ENCODE measurements at regions of chr16 and their contacts with region 1.

Region 1: DNA sequence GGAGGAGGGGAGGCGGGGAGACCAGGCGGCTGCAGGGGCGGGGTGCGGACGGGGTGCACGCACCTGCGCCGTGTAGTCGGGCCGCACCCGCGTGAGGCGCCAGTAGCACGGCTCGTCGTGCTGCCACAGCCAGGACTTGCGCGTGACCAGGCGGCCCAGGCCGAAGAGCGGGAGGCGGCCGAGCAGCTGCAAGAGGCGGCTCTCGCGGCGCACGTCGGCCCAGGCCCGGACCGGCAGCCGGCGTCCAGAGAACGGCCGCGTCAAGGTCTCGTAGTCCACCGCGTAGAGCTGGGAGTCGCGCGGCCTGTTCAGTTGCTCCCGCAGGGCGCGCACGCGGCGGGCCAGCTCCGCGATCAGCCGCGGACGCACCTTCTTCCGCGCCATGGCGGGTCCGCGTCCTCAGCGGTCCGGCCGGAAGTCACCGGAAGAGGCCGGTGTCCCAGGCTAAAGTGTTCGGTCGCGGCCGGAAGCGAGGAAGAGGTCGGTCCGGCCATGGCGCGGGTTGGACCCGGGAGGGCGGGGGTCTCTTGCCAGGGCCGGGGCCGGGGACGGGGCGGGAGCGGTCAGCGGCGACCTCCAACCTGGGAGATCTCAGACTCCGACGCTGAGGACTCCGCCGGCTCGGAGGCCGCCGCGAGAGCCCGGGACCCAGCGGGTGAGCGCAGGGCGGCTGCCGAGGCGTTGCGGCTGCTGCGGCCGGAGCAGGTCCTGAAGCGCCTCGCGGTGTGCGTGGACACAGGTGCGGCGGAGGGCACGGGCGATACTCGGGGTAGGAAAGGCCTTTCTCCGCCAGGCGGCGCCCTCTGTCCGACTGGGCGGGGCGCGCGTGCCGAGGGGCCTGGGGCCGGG is at the starts of genes EME2 and MRPS34:
- DNase-seq: peak; percentile 89 to 94
- ATAC-seq: peak; percentile 78
- H3K4me3 ChIP-seq: peak within 1 kb of the TSS; percentile 80 to 86
- H3K27ac ChIP-seq: peak within 1 kb of the TSS in 1 of 2 donors; percentile 55
- H3K4me1 ChIP-seq: no peaks in the 10 kb centered on the region
- H3K27me3 ChIP-seq: no peaks in the 10 kb centered on the region
- total RNA-seq, gene EME2: 15.8 to 23.7 TPM
- total RNA-seq, gene MRPS34: 36.5 to 40.5 TPM

Region 2: GRCh38 chr16:1677802-1678496 is 95.0 kb before region 1 on chr16 and contains the start of gene JPT2:
- intact Hi-C with region 1: no loop called
- DNase-seq: peak; percentile 97 to 98
- ATAC-seq: peak; percentile 96
- H3K4me3 ChIP-seq: peak within 1 kb of the TSS; percentile 64 to 67
- H3K27ac ChIP-seq: no peak within 1 kb of the TSS
- H3K4me1 ChIP-seq: no peaks in the 10 kb centered on the region
- H3K27me3 ChIP-seq: no peaks in the 10 kb centered on the region
- total RNA-seq, gene JPT2: 28.3 to 30.8 TPM

Region 3: GRCh38 chr16:1705688-1706385 is 67.1 kb before region 1 on chr16 and contains the start of gene MAPK8IP3:
- intact Hi-C with region 1: loop called in 1 of 2 experiments (anchors 5 kb)
- DNase-seq: peak; percentile 93 to 97
- ATAC-seq: peak; percentile 96
- H3K4me3 ChIP-seq: peak within 1 kb of the TSS; percentile 65 to 71
- H3K27ac ChIP-seq: peak within 1 kb of the TSS in 1 of 2 donors; percentile 92
- H3K4me1 ChIP-seq: no peaks in the 10 kb centered on the region
- H3K27me3 ChIP-seq: no peaks in the 10 kb centered on the region
- total RNA-seq, gene MAPK8IP3: 69.0 to 122 TPM

Measured in aorta (tissue), 5 donors.